Lower leg skin (tissue), 4 donors: ENCODE measurements at regions of chr13 and their contacts with region 1.

Region 1: GRCh38 chr13:87274209-87274819 is 396.9 kb upstream of the SLITRK5 start:
- DNase-seq: no peak
- H3K4me3 ChIP-seq: no peak overlapping the region
- CTCF ChIP-seq: no peak
- POLR2A ChIP-seq: no peak

Region 2: GRCh38 chr13:86870444-86870843 is 403.9 kb before region 1 on chr13:
- intact Hi-C with region 1: loop called (anchors 10 kb)
- DNase-seq: no peak
- H3K4me3 ChIP-seq: no peak overlapping the region
- CTCF ChIP-seq: no peak
- POLR2A ChIP-seq: no peak